ENCODE measurements at regions of chr17 and their contacts with region 1.

Region 1: GRCh38 chr17:62065598-62066468 is 755 bp upstream of the MED13 start:
- DNase-seq: peak; percentile 100
- H3K4me3 ChIP-seq: peak overlapping the region; percentile 84 to 89 (median 88)
- H3K27ac ChIP-seq: peak overlapping the region; percentile 95 to 99 (median 98)
- H3K4me1 ChIP-seq: peaks cover 24 to 41% (median 32%) of the 10 kb centered on the region in 4 donors
- H3K27me3 ChIP-seq: no peaks in the 10 kb centered on the region
- CTCF ChIP-seq: peak; percentile 91 to 95 (median 92)
- EP300 ChIP-seq: no peak
- POLR2A ChIP-seq: no peak

Region 2: GRCh38 chr17:61862975-61863800 is 202.6 kb before region 1 on chr17 and contains the start of gene BRIP1:
- intact Hi-C with region 1: loop called (anchors 10 kb)
- DNase-seq: peak; percentile 98
- H3K4me3 ChIP-seq: peak within 1 kb of the TSS; percentile 73 to 86 (median 74)
- H3K27ac ChIP-seq: peak within 1 kb of the TSS; percentile 77 to 88 (median 80)
- H3K4me1 ChIP-seq: peaks cover 4 to 14% (median 11%) of the 10 kb centered on the region in 4 donors
- H3K27me3 ChIP-seq: no peaks in the 10 kb centered on the region
- CTCF ChIP-seq: peak in 1 of 3 experiments; percentile 3
- EP300 ChIP-seq: no peak
- POLR2A ChIP-seq: no peak
- total RNA-seq, gene BRIP1: 0.13 to 0.42 (median 0.31) TPM

Region 3: GRCh38 chr17:61966191-61966590 is 99.6 kb before region 1 on chr17:
- intact Hi-C with region 1: no loop called
- DNase-seq: no peak
- H3K4me3 ChIP-seq: no peak overlapping the region
- H3K27ac ChIP-seq: no peak overlapping the region
- H3K4me1 ChIP-seq: no peaks in the 10 kb centered on the region
- H3K27me3 ChIP-seq: no peaks in the 10 kb centered on the region
- CTCF ChIP-seq: no peak
- EP300 ChIP-seq: no peak
- POLR2A ChIP-seq: no peak

Measured in esophagus muscularis mucosa (tissue), 4 donors.